H1 (cell line): ENCODE measurements at regions of chr10 and their contacts with region 1.

Region 1: GRCh38 chr10:103598654-103599115 is 105.2 kb downstream of the NEURL1 start:
- DNase-seq: peak; percentile 31 to 81
- H3K4me3 ChIP-seq: no peak overlapping the region
- H3K27ac ChIP-seq: no peak overlapping the region
- H3K4me1 ChIP-seq: peaks cover 0 to 4% (median 1%) of the 10 kb centered on the region in 4 experiments; a peak in 3 of 7 replicates
- H3K27me3 ChIP-seq: no peaks in the 10 kb centered on the region; a peak in 2 of 7 replicates
- CTCF ChIP-seq: peak; percentile 88 to 90 (median 88)
- EP300 ChIP-seq: no peak
- POLR2A ChIP-seq: no peak
- RAD21 ChIP-seq: peak; percentile 91 to 92

Region 2: DNA sequence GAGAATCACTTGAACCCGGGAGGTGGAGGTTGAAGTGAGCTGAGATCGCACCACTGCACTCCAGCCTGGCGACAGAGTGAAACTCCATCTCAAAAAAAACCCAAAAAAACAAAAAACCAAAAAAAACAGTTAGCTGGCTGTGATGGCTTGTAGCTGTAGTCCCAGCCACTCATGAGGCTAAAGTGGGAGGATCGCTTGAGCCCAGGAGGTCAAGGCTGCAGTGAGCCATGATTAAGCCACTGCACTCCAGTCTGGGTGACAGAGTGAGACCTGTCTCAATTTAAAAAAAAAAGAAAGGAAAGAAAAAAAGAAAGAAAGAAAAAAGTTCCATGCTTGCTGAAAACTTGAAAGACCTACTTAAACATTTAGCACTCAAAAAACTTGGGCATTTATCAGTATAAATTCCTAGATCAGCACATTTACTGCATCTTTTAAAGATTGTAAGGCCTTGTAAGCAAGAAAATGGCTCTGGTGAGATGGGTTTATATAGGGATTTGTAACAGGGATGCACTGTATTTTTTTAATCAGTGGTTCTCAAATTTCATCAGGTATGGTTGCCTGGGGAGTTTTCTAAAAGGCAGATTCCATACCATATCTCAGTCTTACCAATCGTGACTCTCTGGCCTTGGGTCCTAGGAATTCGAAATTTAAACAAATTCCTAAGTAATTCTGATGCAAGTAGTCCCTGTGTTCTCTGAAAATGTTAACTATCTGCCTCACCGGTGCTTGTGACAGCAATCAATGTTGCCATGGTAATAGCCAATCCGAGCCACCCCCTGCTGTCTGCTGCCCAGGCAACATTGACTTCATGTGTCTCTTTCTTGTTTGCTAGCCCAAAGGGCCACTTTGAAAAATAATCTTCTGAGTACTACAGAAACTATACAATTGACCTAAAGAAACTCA is 394.1 kb before region 1 on chr10:
- CTCF ChIA-PET with region 1: no interaction called
- POLR2A ChIA-PET with region 1: no interaction called
- DNase-seq: peak; percentile 80 to 90
- H3K4me3 ChIP-seq: peak overlapping the region in 2 of 4 experiments; percentile 12 to 39; a peak in 1 of 8 replicates
- H3K27ac ChIP-seq: peak overlapping the region; percentile 88
- H3K4me1 ChIP-seq: peaks cover 3 to 14% (median 8%) of the 10 kb centered on the region in 4 experiments; a peak in 5 of 7 replicates
- H3K27me3 ChIP-seq: no peaks in the 10 kb centered on the region
- CTCF ChIP-seq: no peak
- EP300 ChIP-seq: peak in 1 of 2 experiments; percentile 96; a peak in 2 of 3 replicates
- POLR2A ChIP-seq: no peak
- RAD21 ChIP-seq: no peak

Region 3: DNA sequence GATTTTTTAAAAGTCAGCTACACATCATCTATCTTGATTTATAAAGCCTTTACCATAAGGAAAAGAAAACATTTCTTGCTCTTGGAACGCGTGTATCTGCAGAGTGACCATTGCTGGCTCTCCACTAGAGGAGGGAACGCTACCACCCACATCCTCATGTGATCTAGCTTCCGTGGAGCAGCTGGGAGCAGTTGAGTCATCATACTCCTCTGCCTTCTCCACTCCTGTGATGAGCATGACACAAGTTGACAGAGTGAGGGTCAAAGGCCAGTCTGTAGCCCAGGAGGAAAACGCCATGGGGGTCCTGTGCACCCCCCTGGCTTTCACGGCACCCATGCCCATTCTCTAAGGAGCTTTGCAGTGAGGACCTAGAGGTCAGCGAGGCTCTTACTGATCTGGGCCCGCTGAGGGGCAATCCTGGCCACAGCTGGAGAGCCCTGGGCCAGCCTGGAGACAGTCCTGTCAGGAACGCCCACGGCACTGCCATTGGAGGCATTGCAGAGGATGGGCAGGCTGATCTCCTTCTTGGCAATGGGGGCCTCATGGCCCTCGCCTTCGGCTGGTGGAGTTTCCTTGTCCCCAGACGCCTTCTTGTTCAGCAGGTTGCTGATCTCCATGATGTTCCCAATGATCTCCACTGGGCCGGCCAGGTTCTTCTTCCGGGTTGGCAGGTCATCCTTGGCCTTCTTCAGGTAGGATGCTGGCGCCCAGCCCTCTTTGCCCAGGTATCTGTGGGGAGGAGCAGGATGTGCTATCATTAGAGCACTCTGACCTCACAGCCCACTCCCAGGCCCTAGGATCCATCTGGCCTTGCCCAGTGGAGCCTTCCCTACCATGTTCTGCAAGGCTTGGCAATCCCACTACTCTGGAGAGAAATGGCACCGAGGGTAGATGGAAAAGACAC is 14.0 kb after region 1 on chr10:
- CTCF ChIA-PET with region 1: interaction called, 68 read pairs
- POLR2A ChIA-PET with region 1: no interaction called
- DNase-seq: no peak
- H3K4me3 ChIP-seq: no peak overlapping the region
- H3K27ac ChIP-seq: no peak overlapping the region
- H3K4me1 ChIP-seq: no peaks in the 10 kb centered on the region
- H3K27me3 ChIP-seq: no peaks in the 10 kb centered on the region; a peak in 1 of 7 replicates
- CTCF ChIP-seq: no peak
- EP300 ChIP-seq: no peak
- POLR2A ChIP-seq: no peak
- RAD21 ChIP-seq: no peak

Region 4: GRCh38 chr10:103637927-103638557 is 39.4 kb after region 1 on chr10:
- CTCF ChIA-PET with region 1: interaction called, 11 read pairs
- POLR2A ChIA-PET with region 1: no interaction called
- DNase-seq: no peak
- H3K4me3 ChIP-seq: no peak overlapping the region
- H3K27ac ChIP-seq: no peak overlapping the region
- H3K4me1 ChIP-seq: peaks cover 8 to 35% (median 27%) of the 10 kb centered on the region in 4 experiments
- H3K27me3 ChIP-seq: no peaks in the 10 kb centered on the region
- CTCF ChIP-seq: no peak
- EP300 ChIP-seq: no peak
- POLR2A ChIP-seq: no peak
- RAD21 ChIP-seq: no peak

Region 5: DNA sequence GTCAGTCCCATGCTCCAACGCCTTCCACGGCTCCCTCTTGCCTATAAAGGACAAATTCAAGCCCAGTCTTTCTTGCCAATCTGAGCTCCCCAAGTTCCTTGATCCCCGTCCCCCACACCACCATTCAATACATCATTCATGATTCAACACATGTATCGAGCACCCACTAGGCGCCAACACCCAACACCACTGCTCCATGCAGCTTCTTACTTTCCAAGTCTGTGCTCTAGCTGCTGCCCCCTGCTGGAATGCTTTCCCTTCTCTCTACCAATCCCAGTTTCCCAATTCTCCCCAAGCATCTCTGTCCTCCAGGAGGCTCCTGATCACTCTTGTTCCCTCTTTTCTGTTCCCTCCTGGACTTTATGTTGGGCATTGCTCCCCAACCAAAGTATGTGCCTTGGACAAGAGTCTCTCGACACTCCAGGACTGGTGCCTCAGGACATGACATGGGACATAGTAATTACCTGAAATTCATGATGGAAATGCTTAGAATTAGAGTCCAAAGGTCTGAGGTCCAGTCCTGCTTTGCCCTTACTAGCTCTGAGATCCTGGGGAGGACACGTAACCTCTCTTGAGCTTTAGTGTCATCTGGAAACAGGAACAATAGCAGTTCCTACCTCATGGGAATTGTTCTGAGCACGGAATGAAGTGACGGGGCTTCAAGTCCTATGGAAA is 67.5 kb after region 1 on chr10:
- CTCF ChIA-PET with region 1: interaction called, 48 read pairs
- POLR2A ChIA-PET with region 1: interaction called, 4 read pairs
- DNase-seq: peak in 1 of 2 experiments; percentile 76
- H3K4me3 ChIP-seq: no peak overlapping the region
- H3K27ac ChIP-seq: no peak overlapping the region
- H3K4me1 ChIP-seq: peaks cover 10 to 27% (median 17%) of the 10 kb centered on the region in 4 experiments
- H3K27me3 ChIP-seq: no peaks in the 10 kb centered on the region; a peak in 1 of 7 replicates
- CTCF ChIP-seq: peak; percentile 43 to 71 (median 64)
- EP300 ChIP-seq: no peak
- POLR2A ChIP-seq: no peak
- RAD21 ChIP-seq: peak; percentile 26 to 58; a peak in 3 of 4 replicates

Region 6: DNA sequence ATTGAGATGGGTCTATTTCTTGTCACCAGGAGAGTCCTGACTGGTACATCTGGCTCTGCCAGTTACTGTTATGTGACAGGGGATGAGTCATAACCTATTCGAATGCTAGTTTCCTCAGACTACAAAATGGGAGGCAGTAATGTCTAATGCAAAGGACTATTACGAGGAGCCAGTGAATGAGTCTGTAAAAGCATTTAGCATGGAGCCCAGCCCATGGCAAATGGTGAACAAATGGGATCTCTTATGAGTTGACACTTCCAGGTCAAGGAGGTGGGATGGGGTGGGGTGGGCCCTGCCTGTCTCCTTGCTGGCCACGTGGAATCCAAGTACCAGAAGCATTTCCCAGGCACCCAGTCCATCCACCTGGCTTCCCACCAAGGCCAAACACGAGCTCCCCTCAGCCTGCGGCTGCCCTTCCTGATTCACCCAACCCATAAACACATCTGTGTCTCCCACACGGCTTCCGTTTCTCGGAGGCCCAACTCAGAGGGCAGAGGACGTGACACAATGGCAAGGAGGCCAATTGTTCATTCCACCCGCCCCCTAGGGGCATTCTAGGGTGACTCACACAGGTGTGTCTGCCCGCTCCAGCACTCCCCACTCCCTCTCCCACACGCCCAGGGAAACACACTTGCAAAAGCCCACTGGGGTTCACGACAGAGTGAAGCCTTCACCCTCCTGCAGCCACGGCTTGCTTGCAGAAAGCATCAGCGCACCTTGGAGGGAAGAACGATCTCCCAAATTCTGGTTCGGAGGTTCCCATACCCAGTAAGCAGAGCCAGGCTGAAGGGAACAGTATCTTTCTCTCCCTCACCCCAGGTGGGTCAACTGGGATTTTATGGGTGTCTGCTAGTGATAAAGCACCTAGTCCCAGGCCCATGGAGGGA is 146.9 kb after region 1 on chr10:
- CTCF ChIA-PET with region 1: no interaction called
- POLR2A ChIA-PET with region 1: no interaction called
- DNase-seq: no peak
- H3K4me3 ChIP-seq: no peak overlapping the region
- H3K27ac ChIP-seq: no peak overlapping the region; the same call in 1 of the 2 replicates
- H3K4me1 ChIP-seq: no peaks in the 10 kb centered on the region; a peak in 2 of 7 replicates
- H3K27me3 ChIP-seq: no peaks in the 10 kb centered on the region; a peak in 1 of 7 replicates
- CTCF ChIP-seq: peak; percentile 15 to 29 (median 16); a peak in 3 of 4 replicates
- EP300 ChIP-seq: no peak
- POLR2A ChIP-seq: no peak
- RAD21 ChIP-seq: peak in 1 of 2 experiments; percentile 28; a peak in 3 of 4 replicates

Region 7: GRCh38 chr10:103763374-103764202 is 164.9 kb after region 1 on chr10:
- CTCF ChIA-PET with region 1: no interaction called
- POLR2A ChIA-PET with region 1: no interaction called
- DNase-seq: no peak
- H3K4me3 ChIP-seq: no peak overlapping the region
- H3K27ac ChIP-seq: no peak overlapping the region
- H3K4me1 ChIP-seq: peaks cover 7 to 11% (median 9%) of the 10 kb centered on the region in 4 experiments
- H3K27me3 ChIP-seq: no peaks in the 10 kb centered on the region
- CTCF ChIP-seq: no peak
- EP300 ChIP-seq: no peak
- POLR2A ChIP-seq: no peak
- RAD21 ChIP-seq: no peak